ENCODE measurements at regions of chr1 and their contacts with region 1.

Region 1: GRCh38 chr1:192477630-192478029 is 97.9 kb upstream of the RGS1 start:
- DNase-seq: peak; percentile 17
- ATAC-seq: peak; percentile 81
- H3K4me3 ChIP-seq: no peak overlapping the region
- H3K27ac ChIP-seq: no peak overlapping the region
- H3K4me1 ChIP-seq: no peaks in the 10 kb centered on the region
- H3K27me3 ChIP-seq: no peaks in the 10 kb centered on the region
- CTCF ChIP-seq: peak; percentile 38 to 76 (median 43); a peak in 5 of 6 replicates
- EP300 ChIP-seq: no peak
- POLR2A ChIP-seq: no peak
- RAD21 ChIP-seq: peak; percentile 94

Region 2: DNA sequence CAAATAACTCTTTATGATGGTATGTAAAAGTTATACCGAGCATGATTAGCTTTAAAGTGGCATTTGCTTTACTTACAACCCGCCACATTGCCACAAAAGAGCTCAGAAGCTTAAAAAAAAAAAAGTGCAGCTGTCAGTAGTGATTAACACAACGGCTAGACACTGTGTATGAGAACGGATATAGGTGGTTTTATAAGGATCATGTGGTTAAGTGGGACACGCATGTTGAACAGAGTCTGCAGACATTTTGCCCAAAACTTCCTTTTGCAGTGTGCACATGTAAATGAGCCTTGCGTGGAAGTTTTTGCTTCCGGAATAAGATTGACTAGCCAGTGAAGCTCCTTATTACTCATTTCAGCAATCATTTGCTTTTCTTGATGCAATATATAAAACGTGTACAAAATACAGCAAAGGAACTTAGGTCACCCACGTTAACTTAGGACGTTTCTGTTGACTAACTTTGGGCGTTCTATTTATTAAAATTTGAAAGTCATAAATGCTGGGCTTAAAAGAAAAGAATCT is 39.2 kb after region 1 on chr1:
- CTCF ChIA-PET with region 1: interaction called, 3 read pairs
- POLR2A ChIA-PET with region 1: no interaction called
- RAD21 ChIA-PET with region 1: interaction called, 4 read pairs
- SMC1A ChIA-PET with region 1: interaction called, 5 read pairs
- in situ Hi-C with region 1: loop called (anchors 5 kb)
- intact Hi-C with region 1: no loop called
- DNase-seq: peak; percentile 99
- ATAC-seq: peak; percentile 87
- H3K4me3 ChIP-seq: 0 out of 2 replicates have a peak overlapping the region, but pooled peaks have one; percentile 34
- H3K27ac ChIP-seq: peak overlapping the region; percentile 72
- H3K4me1 ChIP-seq: peaks cover 22% of the 10 kb centered on the region; the same call in 1 of the 2 replicates
- H3K27me3 ChIP-seq: no peaks in the 10 kb centered on the region
- CTCF ChIP-seq: no peak
- EP300 ChIP-seq: peak; percentile 99
- POLR2A ChIP-seq: no peak
- RAD21 ChIP-seq: peak; percentile 14; the same call in 1 of the 2 replicates

Region 3: GRCh38 chr1:192587386-192588266 is 110.0 kb after region 1 on chr1:
- CTCF ChIA-PET with region 1: interaction called, 16 read pairs
- POLR2A ChIA-PET with region 1: interaction called, 3 read pairs
- RAD21 ChIA-PET with region 1: interaction called, 10 read pairs
- SMC1A ChIA-PET with region 1: interaction called, 15 read pairs
- in situ Hi-C with region 1: no loop called
- intact Hi-C with region 1: no loop called
- DNase-seq: no peak
- ATAC-seq: no peak
- H3K4me3 ChIP-seq: no peak overlapping the region
- H3K27ac ChIP-seq: no peak overlapping the region
- H3K4me1 ChIP-seq: no peaks in the 10 kb centered on the region
- H3K27me3 ChIP-seq: no peaks in the 10 kb centered on the region
- CTCF ChIP-seq: no peak
- EP300 ChIP-seq: no peak
- POLR2A ChIP-seq: no peak
- RAD21 ChIP-seq: no peak

Region 4: DNA sequence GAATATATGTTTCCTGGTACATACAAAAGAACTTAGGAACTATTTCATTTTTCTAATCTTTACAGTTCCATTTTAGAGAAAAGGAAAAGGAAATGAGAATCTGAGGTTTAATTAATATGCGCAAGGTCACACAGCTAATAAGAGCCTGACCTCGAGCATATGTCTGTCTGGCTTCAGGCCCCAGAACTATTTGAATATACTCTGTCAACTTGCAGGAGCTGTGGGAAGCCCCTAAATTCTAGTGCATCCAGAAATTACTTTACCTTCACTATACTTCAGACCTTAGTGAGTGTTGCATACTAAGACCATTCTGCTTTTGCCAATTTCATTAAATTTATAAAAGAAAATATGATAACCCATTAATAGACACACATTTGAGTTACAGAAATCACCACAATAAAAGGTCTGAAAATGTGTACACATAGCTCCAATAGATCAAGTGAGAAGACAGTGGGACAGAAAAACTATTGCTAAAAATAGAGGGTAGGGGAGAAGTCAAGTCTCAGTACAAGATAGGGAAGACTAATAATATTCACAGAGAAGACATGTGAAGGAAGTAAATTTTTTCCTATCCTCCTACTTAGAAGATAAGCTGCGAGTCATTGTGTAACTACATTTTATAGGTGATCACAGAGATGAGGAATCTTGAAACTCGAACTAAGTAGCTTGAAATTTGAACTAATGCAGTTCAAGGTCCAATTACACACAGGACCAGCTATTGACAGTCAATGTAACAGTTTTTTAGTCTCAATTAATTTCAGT is 162.2 kb after region 1 on chr1:
- CTCF ChIA-PET with region 1: interaction called, 12 read pairs
- POLR2A ChIA-PET with region 1: no interaction called
- RAD21 ChIA-PET with region 1: interaction called, 8 read pairs
- SMC1A ChIA-PET with region 1: interaction called, 8 read pairs
- in situ Hi-C with region 1: no loop called
- intact Hi-C with region 1: no loop called
- DNase-seq: peak; percentile 51
- ATAC-seq: peak; percentile 83
- H3K4me3 ChIP-seq: no peak overlapping the region
- H3K27ac ChIP-seq: no peak overlapping the region
- H3K4me1 ChIP-seq: peaks cover 8% of the 10 kb centered on the region
- H3K27me3 ChIP-seq: no peaks in the 10 kb centered on the region; a peak in 2 of 4 replicates
- CTCF ChIP-seq: no peak
- EP300 ChIP-seq: 0 out of 4 replicates have a peak, but pooled peaks of 1 of the 2 experiments have one; percentile 8
- POLR2A ChIP-seq: no peak
- RAD21 ChIP-seq: no peak

Region 5: DNA sequence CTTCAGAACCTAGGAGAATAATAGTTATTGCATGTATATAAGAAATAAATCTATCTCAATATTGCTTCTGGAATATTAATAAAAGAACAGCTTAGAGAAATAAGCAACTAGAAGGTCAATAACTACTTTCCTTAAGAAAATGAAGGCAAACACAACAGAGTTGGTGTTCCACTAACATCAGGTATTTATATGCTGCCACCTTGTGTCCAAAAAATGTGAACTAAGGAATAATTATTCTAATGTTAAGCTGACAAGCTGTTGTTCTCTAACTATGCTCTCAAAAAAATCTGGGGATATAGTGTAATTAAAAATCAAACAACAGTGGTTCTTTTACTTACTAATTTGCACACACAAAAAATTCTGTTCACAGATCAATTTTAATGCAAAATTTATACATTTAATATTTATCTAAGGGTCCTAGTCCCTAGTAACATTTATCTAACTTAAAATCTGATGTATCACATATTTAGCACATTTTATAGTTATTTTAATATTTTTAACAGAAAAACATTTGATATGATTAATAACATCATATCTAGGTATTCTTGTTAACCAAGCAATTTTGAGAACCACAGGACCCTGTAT is 541.9 kb after region 1 on chr1:
- CTCF ChIA-PET with region 1: interaction called, 156 read pairs
- POLR2A ChIA-PET with region 1: no interaction called
- RAD21 ChIA-PET with region 1: interaction called, 39 read pairs
- SMC1A ChIA-PET with region 1: interaction called, 45 read pairs
- in situ Hi-C with region 1: loop called (anchors 5 kb)
- intact Hi-C with region 1: loop called (anchors 2 kb)
- DNase-seq: no peak
- ATAC-seq: peak; percentile 76
- H3K4me3 ChIP-seq: no peak overlapping the region
- H3K27ac ChIP-seq: no peak overlapping the region
- H3K4me1 ChIP-seq: no peaks in the 10 kb centered on the region
- H3K27me3 ChIP-seq: no peaks in the 10 kb centered on the region
- CTCF ChIP-seq: peak; percentile 22 to 53 (median 33); a peak in 4 of 6 replicates
- EP300 ChIP-seq: no peak
- POLR2A ChIP-seq: no peak
- RAD21 ChIP-seq: peak; percentile 62

Region 6: DNA sequence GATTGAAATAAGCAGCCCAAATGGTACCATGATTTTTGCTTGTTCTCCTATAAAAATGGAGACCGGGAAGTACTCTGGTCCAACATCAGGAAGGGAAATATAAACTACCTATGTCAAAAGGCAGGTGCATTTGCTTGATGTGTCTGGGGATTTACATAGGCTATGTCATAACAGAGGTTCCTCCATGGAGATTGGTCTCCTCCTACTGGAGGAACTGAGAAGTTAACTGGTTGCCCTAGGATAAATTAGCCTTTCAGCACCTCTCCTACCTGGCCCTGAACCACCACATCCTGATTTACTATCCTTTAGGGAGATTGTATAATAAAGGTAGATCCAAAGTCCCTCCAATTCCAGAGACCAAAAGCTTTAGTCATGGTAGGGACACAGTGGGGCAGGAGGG is 1818.1 kb after region 1 on chr1:
- CTCF ChIA-PET with region 1: no interaction called
- POLR2A ChIA-PET with region 1: no interaction called
- RAD21 ChIA-PET with region 1: no interaction called
- SMC1A ChIA-PET with region 1: no interaction called
- in situ Hi-C with region 1: loop called (anchors 25 kb)
- intact Hi-C with region 1: no loop called
- DNase-seq: no peak
- ATAC-seq: peak; percentile 94
- H3K4me3 ChIP-seq: no peak overlapping the region
- H3K27ac ChIP-seq: no peak overlapping the region
- H3K4me1 ChIP-seq: no peaks in the 10 kb centered on the region
- H3K27me3 ChIP-seq: no peaks in the 10 kb centered on the region
- CTCF ChIP-seq: peak; percentile 66 to 75 (median 70)
- EP300 ChIP-seq: no peak
- POLR2A ChIP-seq: no peak
- RAD21 ChIP-seq: peak; percentile 88